CD4-positive, alpha-beta T cell (primary cell): ENCODE measurements at regions of chr1 and their contacts with region 1.

Region 1: GRCh38 chr1:203625628-203626019 is 1.0 kb upstream of the ATP2B4 start:
- DNase-seq: peak; percentile 45 to 91 (median 57)
- ATAC-seq: peak; percentile 66
- H3K4me3 ChIP-seq: peak overlapping the region; percentile 92
- H3K4me3 Mint-ChIP-seq: peak overlapping the region; percentile 77
- H3K27ac ChIP-seq: peak overlapping the region; percentile 72 to 86
- H3K27ac Mint-ChIP-seq: peak overlapping the region; percentile 81
- H3K4me1 ChIP-seq: peaks cover 49% of the 10 kb centered on the region
- H3K4me1 Mint-ChIP-seq: peaks cover 47% of the 10 kb centered on the region
- H3K27me3 ChIP-seq: no peaks in the 10 kb centered on the region
- H3K27me3 Mint-ChIP-seq: no peaks in the 10 kb centered on the region
- CTCF ChIP-seq: peak; percentile 74

Region 2: DNA sequence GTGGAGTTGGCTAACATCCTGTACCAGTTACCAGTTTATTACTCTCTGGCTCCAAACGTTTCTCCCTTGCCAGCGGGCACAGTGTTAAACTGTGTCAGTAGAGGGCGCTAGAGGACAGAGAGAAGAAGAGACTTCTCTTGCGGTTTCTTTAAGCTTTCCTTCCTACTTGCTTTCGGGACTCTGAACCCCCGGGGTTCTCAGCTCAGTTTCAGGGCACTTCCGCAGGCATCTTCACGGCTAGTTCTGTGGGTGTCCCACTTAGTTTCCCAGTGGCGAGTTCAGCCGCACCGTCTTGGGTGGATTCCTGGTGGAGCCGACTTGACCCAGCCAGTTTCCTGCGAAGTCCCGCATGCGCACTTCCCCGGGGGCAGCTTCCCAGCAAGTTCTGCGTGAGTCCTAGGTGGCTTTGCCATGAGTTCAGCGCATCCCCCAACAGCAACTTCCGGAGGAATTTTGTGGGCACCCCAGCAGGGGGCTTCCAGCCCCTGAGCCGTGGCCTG is 358.2 kb before region 1 on chr1:
- CTCF ChIA-PET with region 1: interaction called, 10 read pairs
- POLR2A ChIA-PET with region 1: interaction called, 12 read pairs
- intact Hi-C with region 1: loop called (anchors 1 to 10 kb)
- DNase-seq: peak; percentile 67 to 93 (median 78)
- ATAC-seq: peak; percentile 46
- H3K4me3 ChIP-seq: peak overlapping the region; percentile 66
- H3K4me3 Mint-ChIP-seq: peak overlapping the region; percentile 73
- H3K27ac ChIP-seq: peak overlapping the region; percentile 58 to 69
- H3K27ac Mint-ChIP-seq: peak overlapping the region; percentile 77
- H3K4me1 ChIP-seq: peaks cover 38% of the 10 kb centered on the region
- H3K4me1 Mint-ChIP-seq: peaks cover 22% of the 10 kb centered on the region
- H3K27me3 ChIP-seq: no peaks in the 10 kb centered on the region
- H3K27me3 Mint-ChIP-seq: no peaks in the 10 kb centered on the region
- CTCF ChIP-seq: peak; percentile 94

Region 3: GRCh38 chr1:203504397-203505250 is 121.0 kb before region 1 on chr1:
- CTCF ChIA-PET with region 1: interaction called, 16 read pairs
- POLR2A ChIA-PET with region 1: no interaction called
- intact Hi-C with region 1: loop called (anchors 1 to 2 kb)
- DNase-seq: peak; percentile 50 to 89 (median 72)
- ATAC-seq: peak; percentile 65
- H3K4me3 ChIP-seq: no peak overlapping the region
- H3K4me3 Mint-ChIP-seq: no peak overlapping the region
- H3K27ac ChIP-seq: no peak overlapping the region
- H3K27ac Mint-ChIP-seq: no peak overlapping the region
- H3K4me1 ChIP-seq: peaks cover 5% of the 10 kb centered on the region
- H3K4me1 Mint-ChIP-seq: peaks cover 6% of the 10 kb centered on the region
- H3K27me3 ChIP-seq: no peaks in the 10 kb centered on the region
- H3K27me3 Mint-ChIP-seq: no peaks in the 10 kb centered on the region
- CTCF ChIP-seq: peak; percentile 81

Region 4: DNA sequence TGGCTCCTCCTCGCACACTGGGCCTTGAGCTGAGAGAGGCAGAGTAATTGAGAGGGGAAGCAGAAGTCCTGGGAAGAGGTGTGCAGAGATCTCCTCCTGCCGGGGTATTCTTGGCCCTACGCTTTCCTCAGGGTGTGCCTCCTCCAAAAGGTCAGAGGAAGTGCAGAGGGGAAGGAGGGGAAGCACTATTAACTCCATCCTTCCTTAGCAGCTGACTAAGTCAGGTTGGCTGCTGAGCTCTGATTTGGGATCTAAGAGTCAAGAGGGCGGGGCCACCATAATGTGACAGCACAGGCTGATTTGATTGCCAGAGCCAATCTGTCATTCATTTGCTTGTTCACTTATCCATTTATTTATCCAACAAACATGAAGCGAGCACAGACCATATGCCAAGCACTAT is 13.3 kb after region 1 on chr1:
- CTCF ChIA-PET with region 1: interaction called, 13 read pairs
- POLR2A ChIA-PET with region 1: interaction called, 10 read pairs
- intact Hi-C with region 1: no loop called
- DNase-seq: peak in 4 of 14 experiments; percentile 33 to 54 (median 46)
- ATAC-seq: peak; percentile 68
- H3K4me3 ChIP-seq: no peak overlapping the region
- H3K4me3 Mint-ChIP-seq: peak overlapping the region; percentile 48
- H3K27ac ChIP-seq: no peak overlapping the region
- H3K27ac Mint-ChIP-seq: peak overlapping the region; percentile 48
- H3K4me1 ChIP-seq: peaks cover 73% of the 10 kb centered on the region
- H3K4me1 Mint-ChIP-seq: peaks cover 75% of the 10 kb centered on the region
- H3K27me3 ChIP-seq: no peaks in the 10 kb centered on the region
- H3K27me3 Mint-ChIP-seq: no peaks in the 10 kb centered on the region
- CTCF ChIP-seq: no peak

Region 5: DNA sequence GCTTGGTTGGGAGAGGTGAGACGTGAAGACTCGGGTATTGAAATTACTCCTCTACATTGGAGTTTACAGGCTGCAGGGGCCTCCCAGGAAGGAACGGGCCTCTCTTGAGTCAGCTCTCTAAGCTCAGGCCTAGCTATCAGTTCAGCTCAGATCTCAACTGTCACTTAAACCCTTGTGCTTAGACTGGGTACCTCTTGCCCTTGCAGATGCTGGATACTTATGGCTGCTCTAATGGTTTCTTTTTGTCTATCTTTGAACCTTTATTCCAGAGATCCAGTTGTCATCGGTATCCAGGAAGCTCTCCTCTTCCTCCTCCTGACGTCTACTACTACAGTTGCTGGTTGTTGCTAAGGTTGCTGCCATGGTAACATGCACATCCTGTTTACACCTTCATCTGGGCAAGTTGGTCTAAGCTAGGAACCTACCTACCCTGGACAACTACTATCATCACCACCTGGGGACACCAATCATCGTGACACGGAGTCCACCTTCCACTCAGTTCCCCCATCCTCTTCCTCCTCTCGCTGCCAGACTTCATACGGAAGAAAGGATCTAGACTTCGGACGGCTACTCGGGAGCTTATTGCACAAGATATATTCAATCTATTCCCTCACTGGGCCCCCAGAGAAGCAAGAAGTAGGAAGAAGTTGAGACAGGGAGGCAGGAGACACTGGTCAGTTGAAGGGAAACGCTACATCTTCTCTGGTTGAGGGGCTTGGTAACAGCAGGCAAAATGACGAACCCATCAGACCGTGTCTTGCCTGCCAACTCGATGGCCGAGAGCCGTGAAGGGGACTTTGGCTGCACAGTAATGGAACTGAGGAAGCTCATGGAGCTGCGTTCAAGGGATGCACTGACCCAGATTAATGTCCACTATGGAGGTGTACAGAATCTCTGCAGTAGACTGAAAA is 57.1 kb after region 1 on chr1:
- CTCF ChIA-PET with region 1: interaction called, 15 read pairs
- POLR2A ChIA-PET with region 1: interaction called, 44 read pairs
- intact Hi-C with region 1: no loop called
- DNase-seq: peak in 13 of 14 experiments; percentile 19 to 94 (median 59)
- ATAC-seq: peak; percentile 93
- H3K4me3 ChIP-seq: no peak overlapping the region
- H3K4me3 Mint-ChIP-seq: peak overlapping the region; percentile 20
- H3K27ac ChIP-seq: peak overlapping the region; percentile 64 to 71
- H3K27ac Mint-ChIP-seq: peak overlapping the region; percentile 89
- H3K4me1 ChIP-seq: peaks cover 42% of the 10 kb centered on the region
- H3K4me1 Mint-ChIP-seq: peaks cover 67% of the 10 kb centered on the region
- H3K27me3 ChIP-seq: no peaks in the 10 kb centered on the region
- H3K27me3 Mint-ChIP-seq: no peaks in the 10 kb centered on the region
- CTCF ChIP-seq: no peak

Region 6: GRCh38 chr1:203823306-203823705 is 197.7 kb after region 1 on chr1:
- CTCF ChIA-PET with region 1: no interaction called
- POLR2A ChIA-PET with region 1: no interaction called
- intact Hi-C with region 1: loop called in 1 of 2 experiments (anchors 10 kb)
- DNase-seq: no peak
- ATAC-seq: no peak
- H3K4me3 ChIP-seq: no peak overlapping the region
- H3K4me3 Mint-ChIP-seq: no peak overlapping the region
- H3K27ac ChIP-seq: no peak overlapping the region
- H3K27ac Mint-ChIP-seq: peak overlapping the region; percentile 27
- H3K4me1 ChIP-seq: no peaks in the 10 kb centered on the region
- H3K4me1 Mint-ChIP-seq: peaks cover 31% of the 10 kb centered on the region
- H3K27me3 ChIP-seq: no peaks in the 10 kb centered on the region
- H3K27me3 Mint-ChIP-seq: no peaks in the 10 kb centered on the region
- CTCF ChIP-seq: no peak